ENCODE measurements at regions of chr2 and their contacts with region 1.

Region 1: DNA sequence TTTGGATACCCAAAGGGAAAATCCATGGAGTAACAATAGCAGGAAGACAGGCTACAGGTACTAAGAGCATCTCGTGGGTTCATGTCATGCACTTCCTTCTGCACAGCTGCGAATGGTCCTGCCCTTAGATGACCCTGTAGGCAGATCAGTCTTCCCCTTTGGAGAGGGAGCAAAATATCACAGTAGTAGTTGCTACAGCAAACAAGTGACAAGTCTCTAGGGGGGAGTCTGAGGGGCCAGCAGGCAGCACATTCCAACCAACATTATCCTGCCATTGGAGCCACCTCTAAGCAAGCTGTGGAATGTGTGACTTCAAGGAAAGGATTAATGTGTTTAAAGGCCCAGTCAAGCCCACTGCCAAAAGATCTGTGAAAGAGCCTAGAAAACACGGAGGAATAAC is 273.2 kb upstream of the PARD3B start:
- DNase-seq: no peak

Region 2: GRCh38 chr2:203463266-203463678 is 808.8 kb before region 1 on chr2:
- intact Hi-C with region 1: no loop called
- DNase-seq: no peak

Region 3: GRCh38 chr2:204260162-204260877 is 11.8 kb before region 1 on chr2:
- intact Hi-C with region 1: loop called (anchors 2 kb)
- DNase-seq: peak; percentile 40 to 94 (median 76)